A549 (cell line): ENCODE measurements at regions of chr11 and their contacts with region 1.

Region 1: DNA sequence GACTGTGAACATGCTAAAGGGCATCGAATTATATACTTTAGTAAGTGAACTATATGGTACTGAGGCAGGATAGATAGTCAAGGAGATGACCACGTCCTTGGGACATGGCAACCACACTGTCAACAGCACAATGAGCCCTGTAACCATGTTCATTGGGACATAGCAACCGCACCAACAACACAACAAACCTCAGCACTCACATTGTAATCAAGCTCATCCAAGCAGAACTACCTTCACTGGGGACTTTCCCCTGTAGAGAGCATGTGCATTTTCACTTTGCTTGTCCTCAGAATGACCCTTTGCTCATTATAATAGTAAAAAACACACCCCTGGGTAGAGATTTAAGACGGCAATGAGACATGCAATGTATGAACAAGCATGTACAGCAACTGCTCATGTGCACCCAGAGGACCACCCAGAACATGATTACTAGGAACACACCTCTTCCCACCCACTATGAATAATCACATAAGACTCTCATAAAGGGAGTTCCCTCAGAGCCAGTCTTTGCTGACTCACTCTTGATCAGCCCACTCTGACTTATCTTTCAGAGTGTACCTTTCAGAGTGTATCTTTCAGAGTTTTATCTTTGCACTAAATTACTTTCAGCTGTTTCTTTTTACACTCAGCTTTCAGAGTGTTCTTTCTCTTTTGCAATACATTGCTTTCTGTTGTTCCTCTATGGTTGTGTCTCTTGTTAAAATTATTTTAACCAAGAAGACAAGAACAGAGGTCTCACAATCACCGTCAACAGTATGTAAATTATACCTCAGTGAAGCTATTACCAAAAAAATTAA is 4.1 kb upstream of the PLAAT2 start:
- DNase-seq: peak; percentile 66 to 95
- ATAC-seq: peak; percentile 95 to 97
- H3K4me3 ChIP-seq: no peak overlapping the region
- H3K27ac ChIP-seq: peak overlapping the region; percentile 71 to 85
- H3K4me1 ChIP-seq: peaks cover 39% of the 10 kb centered on the region
- CTCF ChIP-seq: no peak
- EP300 ChIP-seq: no peak
- POLR2A ChIP-seq: no peak
- RAD21 ChIP-seq: no peak

Region 2: DNA sequence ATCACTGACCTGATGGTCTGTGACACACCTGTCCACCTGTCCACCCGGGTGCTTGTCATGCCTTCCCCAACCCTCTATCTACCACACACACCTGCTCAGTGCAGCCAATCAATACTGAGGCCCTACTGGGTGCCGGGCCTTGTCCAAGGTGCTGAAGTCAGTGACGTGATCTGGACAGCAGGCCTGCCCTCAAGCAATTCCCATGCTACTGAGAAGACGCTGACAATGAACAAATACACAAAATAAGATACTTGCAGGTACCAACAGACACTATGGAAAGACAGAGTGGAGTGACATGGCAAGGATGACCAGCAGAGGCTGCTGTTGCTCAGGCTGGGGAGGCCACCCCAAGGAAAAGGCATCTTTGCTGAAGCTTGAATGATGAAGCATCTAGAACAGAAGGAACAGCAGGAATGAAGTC is 25.7 kb after region 1 on chr11:
- CTCF ChIA-PET with region 1: interaction called, 10 read pairs
- POLR2A ChIA-PET with region 1: no interaction called
- DNase-seq: peak; percentile 45 to 62
- ATAC-seq: peak; percentile 72 to 90; a peak in 5 of 6 replicates
- H3K4me3 ChIP-seq: no peak overlapping the region
- H3K27ac ChIP-seq: no peak overlapping the region
- H3K4me1 ChIP-seq: peaks cover 7% of the 10 kb centered on the region; the same call in 1 of the 3 replicates
- CTCF ChIP-seq: peak; percentile 62
- EP300 ChIP-seq: no peak
- POLR2A ChIP-seq: no peak
- RAD21 ChIP-seq: peak; percentile 68 to 88; a peak in 4 of 5 replicates